ENCODE measurements at regions of chr7 and their contacts with region 1.

Region 1: DNA sequence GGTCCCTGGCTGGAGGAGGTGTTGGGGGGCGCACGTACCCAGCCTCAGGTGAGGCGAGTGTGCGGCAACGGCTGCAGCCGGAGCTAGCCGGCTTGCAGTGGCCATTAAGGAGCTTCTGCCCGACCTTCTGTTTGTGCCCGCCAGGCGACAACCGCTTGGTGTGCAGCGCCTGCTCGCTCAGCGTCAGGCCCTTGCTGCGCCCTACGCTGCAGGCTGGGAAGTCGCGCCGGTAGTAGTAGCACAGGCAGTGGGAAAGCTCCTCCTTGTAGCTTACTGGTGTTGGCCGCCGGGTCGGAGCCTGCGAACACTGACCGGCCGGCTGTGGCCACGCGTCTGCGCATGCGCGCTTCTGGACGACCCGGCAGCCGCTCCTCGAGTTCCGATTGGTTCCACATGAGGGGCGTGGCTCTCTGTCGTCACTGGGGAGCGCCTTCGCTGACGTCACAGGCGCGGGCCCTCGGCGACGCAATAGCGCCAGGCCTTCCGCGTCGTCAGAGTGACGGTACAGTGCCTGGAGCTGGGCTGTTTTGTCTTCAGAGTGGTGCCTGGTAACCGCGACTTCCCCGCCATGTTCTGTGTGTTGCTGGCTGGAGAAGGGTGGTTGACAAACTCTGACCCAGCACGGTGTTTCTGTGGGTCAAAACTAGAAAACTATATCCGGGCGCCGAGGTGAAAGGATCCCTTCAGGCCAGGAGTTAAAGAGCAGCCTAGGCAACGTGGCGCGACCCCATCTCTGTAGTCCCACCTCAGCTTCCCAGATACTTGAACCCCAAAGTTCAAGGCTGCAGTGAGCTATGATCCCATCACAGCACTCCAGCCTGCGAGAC is 76.3 kb upstream of the TMEM248 start:
- DNase-seq: peak; percentile 100
- ATAC-seq: peak; percentile 93
- H3K4me3 Mint-ChIP-seq: peak overlapping the region; percentile 98
- H3K27ac Mint-ChIP-seq: peak overlapping the region; percentile 99
- H3K4me1 Mint-ChIP-seq: peaks cover 21% of the 10 kb centered on the region
- H3K27me3 Mint-ChIP-seq: no peaks in the 10 kb centered on the region

Region 2: DNA sequence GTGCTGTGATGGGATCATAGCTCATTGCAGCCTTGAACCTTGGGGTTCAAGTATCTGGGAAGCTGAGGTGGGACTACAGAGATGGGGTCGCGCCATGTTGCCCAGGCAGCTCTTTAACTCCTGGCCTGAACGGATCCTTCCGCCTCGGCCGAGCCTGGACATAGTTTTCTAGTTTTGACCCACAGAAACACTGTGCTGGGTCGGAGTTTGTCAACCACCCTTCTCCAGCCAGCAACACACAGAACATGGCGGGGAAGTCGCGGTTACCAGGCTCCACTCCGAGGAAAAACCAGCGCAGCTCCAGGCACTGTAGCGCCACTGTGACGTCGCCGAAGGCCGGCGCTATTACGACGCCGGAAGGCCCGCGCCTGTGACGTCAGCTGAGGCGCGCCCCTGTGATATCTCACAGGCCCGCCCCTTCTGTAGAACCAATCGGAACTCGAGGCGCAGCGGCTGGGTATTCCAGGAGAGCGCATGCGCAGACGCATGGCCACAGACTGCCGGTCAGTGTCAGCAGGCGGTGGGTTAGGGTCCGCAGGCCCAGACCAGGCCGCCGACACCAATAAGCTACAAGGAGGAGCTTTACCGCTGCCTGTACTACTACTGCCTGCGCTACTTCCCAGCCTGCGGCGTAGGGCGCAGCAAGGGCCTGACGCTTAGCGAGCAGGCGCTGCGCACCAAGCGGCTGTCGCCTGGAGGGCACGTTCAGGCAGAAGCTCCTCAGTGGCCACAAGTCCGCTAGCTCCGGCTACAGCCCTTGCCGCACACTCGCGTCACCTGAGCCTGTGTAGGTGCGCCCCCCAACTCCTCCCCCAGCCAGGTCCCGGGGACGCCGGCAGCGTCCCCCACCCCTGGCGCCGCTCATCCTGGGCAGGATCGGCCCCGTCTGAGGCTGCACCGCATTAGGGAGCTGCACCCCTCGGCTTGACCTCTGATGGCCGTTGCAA is 351.3 kb before region 1 on chr7:
- POLR2A ChIA-PET with region 1: interaction called, 10 read pairs
- DNase-seq: peak; percentile 97
- ATAC-seq: peak; percentile 97
- H3K4me3 Mint-ChIP-seq: peak overlapping the region; percentile 84
- H3K27ac Mint-ChIP-seq: peak overlapping the region; percentile 96
- H3K4me1 Mint-ChIP-seq: peaks cover 4% of the 10 kb centered on the region
- H3K27me3 Mint-ChIP-seq: no peaks in the 10 kb centered on the region

Region 3: GRCh38 chr7:66740302-66740979 is 104.3 kb before region 1 on chr7 and contains the start of gene RABGEF1:
- POLR2A ChIA-PET with region 1: interaction called, 17 read pairs
- DNase-seq: peak; percentile 97
- ATAC-seq: peak; percentile 96
- H3K4me3 Mint-ChIP-seq: peak within 1 kb of the TSS; percentile 96
- H3K27ac Mint-ChIP-seq: peak within 1 kb of the TSS; percentile 99
- H3K4me1 Mint-ChIP-seq: peaks cover 10% of the 10 kb centered on the region
- H3K27me3 Mint-ChIP-seq: no peaks in the 10 kb centered on the region
- total RNA-seq, gene RABGEF1: 24.7 to 25.8 TPM

Region 4: GRCh38 chr7:66920769-66921395 is 76.1 kb after region 1 on chr7 and contains the start of gene TMEM248:
- POLR2A ChIA-PET with region 1: interaction called, 31 read pairs
- DNase-seq: peak; percentile 96
- ATAC-seq: peak; percentile 87
- H3K4me3 Mint-ChIP-seq: peak within 1 kb of the TSS; percentile 100
- H3K27ac Mint-ChIP-seq: peak within 1 kb of the TSS; percentile 99
- H3K4me1 Mint-ChIP-seq: peaks cover 24% of the 10 kb centered on the region
- H3K27me3 Mint-ChIP-seq: no peaks in the 10 kb centered on the region
- total RNA-seq, gene TMEM248: 86.9 to 88.1 TPM

Measured in activated naive CD8-positive, alpha-beta T cell treated with anti-CD3 and anti-CD28 coated beads, Interleukin-2, amount 10 ng/mL, durations not matched to agents 7 days and 5 days (primary cell).